BJ (cell line): ENCODE measurements at regions of chr11 and their contacts with region 1.

Region 1: GRCh38 chr11:130894322-130895025 is 21.8 kb downstream of the SNX19 start:
- DNase-seq: no peak
- H3K4me3 ChIP-seq: no peak overlapping the region
- H3K27me3 ChIP-seq: no peaks in the 10 kb centered on the region
- CTCF ChIP-seq: peak; percentile 89

Region 2: GRCh38 chr11:130719220-130719915 is 175.1 kb before region 1 on chr11:
- CTCF ChIA-PET with region 1: no interaction called
- POLR2A ChIA-PET with region 1: no interaction called
- DNase-seq: peak; percentile 39
- H3K4me3 ChIP-seq: no peak overlapping the region
- H3K27me3 ChIP-seq: no peaks in the 10 kb centered on the region
- CTCF ChIP-seq: no peak

Region 3: GRCh38 chr11:130882138-130882551 is 12.3 kb before region 1 on chr11:
- CTCF ChIA-PET with region 1: interaction called, 60 read pairs
- POLR2A ChIA-PET with region 1: no interaction called
- DNase-seq: no peak
- H3K4me3 ChIP-seq: no peak overlapping the region
- H3K27me3 ChIP-seq: no peaks in the 10 kb centered on the region
- CTCF ChIP-seq: no peak

Region 4: DNA sequence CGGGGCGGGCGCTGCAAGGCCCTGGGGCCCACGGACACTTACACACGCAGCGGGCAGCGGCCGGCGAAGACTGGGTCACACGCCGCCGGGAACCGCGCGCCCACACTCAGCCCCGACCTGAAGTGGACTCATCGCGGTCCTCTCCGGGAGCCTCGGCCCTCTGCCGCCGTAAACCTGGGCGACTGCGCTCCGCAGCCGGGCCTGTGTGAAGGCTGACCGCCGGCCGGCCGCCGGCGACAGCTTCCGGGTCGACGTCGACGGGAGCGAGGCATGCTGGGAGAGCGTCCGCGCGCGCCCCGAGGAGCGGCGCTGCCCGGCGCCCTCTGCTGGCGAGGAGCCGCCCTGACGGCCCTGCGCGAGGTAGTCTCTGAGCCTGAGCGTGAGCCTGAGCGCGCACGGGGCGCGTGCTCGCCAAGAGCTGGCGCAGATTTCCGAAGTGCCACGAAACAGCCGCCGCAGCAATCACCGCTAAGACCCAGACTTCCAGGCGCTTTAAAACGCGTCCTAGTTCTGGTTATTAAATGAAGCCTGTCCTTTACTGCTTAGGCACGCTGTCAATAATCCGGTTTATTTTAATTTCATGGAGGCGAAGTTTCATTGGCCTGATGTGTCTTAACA is 21.9 kb after region 1 on chr11 and contains the start of gene SNX19:
- CTCF ChIA-PET with region 1: interaction called, 19 read pairs
- POLR2A ChIA-PET with region 1: no interaction called
- DNase-seq: peak; percentile 44
- H3K4me3 ChIP-seq: peak within 1 kb of the TSS; percentile 85
- H3K27me3 ChIP-seq: no peaks in the 10 kb centered on the region
- CTCF ChIP-seq: peak; percentile 75
- polyA plus RNA-seq, gene SNX19: 85.4 and 99.9 TPM in 2 replicates

Region 5: GRCh38 chr11:131025020-131025419 is 130.5 kb after region 1 on chr11:
- CTCF ChIA-PET with region 1: no interaction called
- POLR2A ChIA-PET with region 1: no interaction called
- DNase-seq: no peak
- H3K4me3 ChIP-seq: no peak overlapping the region
- H3K27me3 ChIP-seq: no peaks in the 10 kb centered on the region
- CTCF ChIP-seq: peak; percentile 77

Region 6: DNA sequence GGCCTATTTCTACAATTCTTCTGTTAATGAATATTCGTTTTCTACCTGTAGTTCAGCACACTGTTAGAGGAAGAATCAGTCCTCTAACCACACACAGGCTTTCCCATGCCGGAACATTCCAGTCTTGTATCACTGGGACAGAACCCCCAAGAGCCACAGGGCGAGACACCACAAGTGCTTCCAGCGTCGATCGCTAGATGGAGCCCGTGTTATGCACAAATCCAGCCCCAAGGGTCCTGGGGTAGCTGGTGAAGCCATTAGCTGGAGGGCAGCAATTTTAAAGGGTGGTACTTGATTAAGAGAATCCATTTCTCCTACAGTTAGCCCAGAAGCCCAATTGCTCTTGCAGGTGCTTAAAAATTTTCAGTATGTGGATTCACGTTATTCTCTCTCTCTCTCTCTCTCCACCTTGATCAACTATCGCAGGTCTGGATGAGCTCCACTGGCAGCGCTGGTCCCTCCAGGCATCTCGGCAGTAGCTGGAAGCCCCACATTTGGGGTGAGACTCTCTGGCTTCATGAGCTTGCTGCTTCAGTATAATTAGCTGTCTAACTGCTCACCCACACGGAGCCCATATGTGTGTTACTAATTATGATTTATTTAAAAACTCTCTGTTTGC is 170.0 kb after region 1 on chr11:
- CTCF ChIA-PET with region 1: no interaction called
- POLR2A ChIA-PET with region 1: no interaction called
- DNase-seq: no peak
- H3K4me3 ChIP-seq: no peak overlapping the region
- H3K27me3 ChIP-seq: no peaks in the 10 kb centered on the region
- CTCF ChIP-seq: peak; percentile 96

Region 7: DNA sequence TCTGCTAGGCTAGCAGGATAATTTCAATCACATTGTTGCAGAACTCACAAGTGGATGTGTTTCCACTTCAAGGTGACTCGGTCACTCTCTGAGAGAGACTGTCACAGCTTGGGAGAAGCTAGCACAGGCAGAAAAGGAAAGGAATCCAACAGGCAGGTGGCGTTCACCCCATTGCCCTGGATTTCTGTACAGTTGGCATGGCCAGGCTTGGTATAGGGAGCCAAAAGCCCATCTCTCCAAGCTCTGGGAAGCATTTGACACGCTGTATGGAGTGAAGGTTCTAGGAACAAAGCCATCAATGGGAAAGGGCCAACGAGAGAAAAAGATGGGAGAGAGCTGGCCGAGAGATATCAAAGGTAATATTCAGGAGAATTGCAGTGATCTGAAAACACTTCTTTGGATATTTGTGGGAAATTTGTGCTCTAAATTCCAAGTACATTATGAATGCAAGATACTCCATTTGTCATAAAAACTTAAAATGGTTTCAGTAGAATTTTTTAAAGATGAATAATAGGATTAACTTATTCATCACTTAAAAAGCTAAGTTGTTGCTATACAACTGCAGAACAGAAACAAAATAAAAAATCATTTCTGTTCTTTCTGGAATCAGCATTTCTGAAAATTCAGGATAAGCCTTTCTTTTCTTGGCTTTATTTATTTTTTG is 252.5 kb after region 1 on chr11:
- CTCF ChIA-PET with region 1: no interaction called
- POLR2A ChIA-PET with region 1: no interaction called
- DNase-seq: peak; percentile 9
- H3K4me3 ChIP-seq: no peak overlapping the region
- H3K27me3 ChIP-seq: no peaks in the 10 kb centered on the region
- CTCF ChIP-seq: no peak